MCF 10A (cell line): ENCODE measurements at regions of chr16 and their contacts with region 1.

Region 1: GRCh38 chr16:53503270-53503923 is 388 bp upstream of the AKTIP start:
- DNase-seq: peak; percentile 100
- H3K4me3 Mint-ChIP-seq: peak overlapping the region; percentile 70
- H3K27ac Mint-ChIP-seq: peak overlapping the region; percentile 88
- H3K4me1 Mint-ChIP-seq: peaks cover 23% of the 10 kb centered on the region
- H3K27me3 Mint-ChIP-seq: no peaks in the 10 kb centered on the region
- CTCF ChIP-seq: no peak

Region 2: GRCh38 chr16:53323924-53324323 is 179.5 kb before region 1 on chr16:
- CTCF ChIA-PET with region 1: no interaction called
- POLR2A ChIA-PET with region 1: interaction called, 4 read pairs
- intact Hi-C with region 1: loop called (anchors 10 kb)
- DNase-seq: no peak
- H3K4me3 Mint-ChIP-seq: no peak overlapping the region
- H3K27ac Mint-ChIP-seq: no peak overlapping the region
- H3K4me1 Mint-ChIP-seq: no peaks in the 10 kb centered on the region
- H3K27me3 Mint-ChIP-seq: no peaks in the 10 kb centered on the region
- CTCF ChIP-seq: no peak

Region 3: GRCh38 chr16:53913099-53913870 is 409.9 kb after region 1 on chr16:
- CTCF ChIA-PET with region 1: no interaction called
- POLR2A ChIA-PET with region 1: no interaction called
- intact Hi-C with region 1: no loop called
- DNase-seq: peak; percentile 97
- H3K4me3 Mint-ChIP-seq: no peak overlapping the region
- H3K27ac Mint-ChIP-seq: peak overlapping the region; percentile 35
- H3K4me1 Mint-ChIP-seq: peaks cover 16% of the 10 kb centered on the region
- H3K27me3 Mint-ChIP-seq: no peaks in the 10 kb centered on the region
- CTCF ChIP-seq: no peak